WTC11 (cell line): ENCODE measurements at regions of chr22 and their contacts with region 1.

Region 1: GRCh38 chr22:20013382-20013871 is 3.2 kb downstream of the ARVCF start:
- DNase-seq: peak; percentile 91
- ATAC-seq: peak; percentile 62
- H3K4me3 Mint-ChIP-seq: no peak overlapping the region
- H3K27ac Mint-ChIP-seq: no peak overlapping the region
- H3K4me1 Mint-ChIP-seq: peaks cover 8% of the 10 kb centered on the region
- H3K27me3 Mint-ChIP-seq: peaks cover 29% of the 10 kb centered on the region
- CTCF ChIP-seq: peak; percentile 35; the same call in 1 of the 2 replicates

Region 2: DNA sequence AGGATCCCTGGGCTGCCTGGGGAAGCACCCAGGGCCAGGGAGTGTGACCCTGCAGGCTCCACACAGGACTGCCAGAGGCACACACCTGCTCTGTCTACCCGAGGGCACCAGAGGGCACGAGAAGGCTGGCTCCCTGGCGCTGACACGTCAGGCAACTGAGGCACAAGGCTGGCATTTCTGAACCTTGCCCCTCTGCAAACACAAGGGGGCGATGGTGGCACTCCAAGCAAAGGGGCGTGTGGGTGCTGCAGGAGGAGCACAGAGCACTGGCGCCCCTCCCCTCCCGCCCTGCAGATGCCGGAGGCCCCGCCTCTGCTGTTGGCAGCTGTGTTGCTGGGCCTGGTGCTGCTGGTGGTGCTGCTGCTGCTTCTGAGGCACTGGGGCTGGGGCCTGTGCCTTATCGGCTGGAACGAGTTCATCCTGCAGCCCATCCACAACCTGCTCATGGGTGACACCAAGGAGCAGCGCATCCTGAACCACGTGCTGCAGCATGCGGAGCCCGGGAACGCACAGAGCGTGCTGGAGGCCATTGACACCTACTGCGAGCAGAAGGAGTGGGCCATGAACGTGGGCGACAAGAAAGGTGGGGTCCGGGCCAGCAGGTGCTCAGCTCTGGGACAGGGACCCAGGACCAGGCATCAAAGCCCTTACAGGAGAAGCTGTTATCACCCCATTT is 51.1 kb before region 1 on chr22:
- CTCF ChIA-PET with region 1: interaction called, 22 read pairs
- POLR2A ChIA-PET with region 1: interaction called, 4 read pairs
- DNase-seq: peak; percentile 91
- ATAC-seq: peak; percentile 65
- H3K4me3 Mint-ChIP-seq: peak overlapping the region; percentile 61
- H3K27ac Mint-ChIP-seq: peak overlapping the region; percentile 84
- H3K4me1 Mint-ChIP-seq: peaks cover 39% of the 10 kb centered on the region
- H3K27me3 Mint-ChIP-seq: no peaks in the 10 kb centered on the region; the same call in 1 of the 2 replicates
- CTCF ChIP-seq: peak; percentile 81

Region 3: DNA sequence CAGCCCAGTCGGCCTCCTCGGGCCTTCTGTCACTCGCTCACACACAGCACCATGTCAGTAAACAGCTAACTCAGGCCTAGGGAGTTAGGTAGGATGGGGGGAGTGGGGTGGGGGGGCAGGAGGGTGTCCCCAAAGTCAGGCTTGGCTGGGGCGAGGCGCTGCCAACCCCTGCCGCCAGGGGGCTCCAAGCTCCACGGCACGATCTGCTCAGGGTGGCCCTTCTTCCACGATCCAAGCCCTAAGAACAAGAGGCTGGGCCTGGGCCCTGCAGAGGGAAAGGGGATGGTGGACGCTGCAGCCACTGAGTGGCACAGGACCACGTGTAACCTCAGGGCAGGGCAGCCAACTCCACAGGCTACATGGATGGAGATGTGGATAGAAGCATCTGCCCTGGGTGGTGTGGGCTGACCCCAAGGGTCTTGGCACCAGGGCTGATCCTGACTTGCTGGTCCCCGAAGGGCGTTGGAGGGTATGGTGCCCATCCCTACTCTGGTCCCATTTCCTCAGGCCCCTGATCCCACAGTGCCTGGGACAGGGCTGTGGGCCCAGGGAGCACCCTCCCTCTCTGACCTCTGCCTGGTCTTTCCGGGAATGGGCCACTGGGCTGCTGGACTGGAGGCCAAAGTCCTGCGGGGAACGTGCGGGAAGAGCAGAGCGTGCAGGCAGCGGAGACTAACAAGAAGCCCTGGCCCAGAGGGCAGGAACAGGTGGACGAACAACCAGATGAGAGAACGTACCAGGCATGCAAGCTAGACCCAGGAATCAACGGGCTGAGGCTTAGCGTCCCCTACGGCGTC is 42.8 kb before region 1 on chr22:
- CTCF ChIA-PET with region 1: interaction called, 181 read pairs
- POLR2A ChIA-PET with region 1: no interaction called
- DNase-seq: peak; percentile 89
- ATAC-seq: peak; percentile 32
- H3K4me3 Mint-ChIP-seq: no peak overlapping the region
- H3K27ac Mint-ChIP-seq: peak overlapping the region; percentile 31; the same call in 1 of the 2 replicates
- H3K4me1 Mint-ChIP-seq: peaks cover 21% of the 10 kb centered on the region
- H3K27me3 Mint-ChIP-seq: no peaks in the 10 kb centered on the region
- CTCF ChIP-seq: peak; percentile 94

Region 4: DNA sequence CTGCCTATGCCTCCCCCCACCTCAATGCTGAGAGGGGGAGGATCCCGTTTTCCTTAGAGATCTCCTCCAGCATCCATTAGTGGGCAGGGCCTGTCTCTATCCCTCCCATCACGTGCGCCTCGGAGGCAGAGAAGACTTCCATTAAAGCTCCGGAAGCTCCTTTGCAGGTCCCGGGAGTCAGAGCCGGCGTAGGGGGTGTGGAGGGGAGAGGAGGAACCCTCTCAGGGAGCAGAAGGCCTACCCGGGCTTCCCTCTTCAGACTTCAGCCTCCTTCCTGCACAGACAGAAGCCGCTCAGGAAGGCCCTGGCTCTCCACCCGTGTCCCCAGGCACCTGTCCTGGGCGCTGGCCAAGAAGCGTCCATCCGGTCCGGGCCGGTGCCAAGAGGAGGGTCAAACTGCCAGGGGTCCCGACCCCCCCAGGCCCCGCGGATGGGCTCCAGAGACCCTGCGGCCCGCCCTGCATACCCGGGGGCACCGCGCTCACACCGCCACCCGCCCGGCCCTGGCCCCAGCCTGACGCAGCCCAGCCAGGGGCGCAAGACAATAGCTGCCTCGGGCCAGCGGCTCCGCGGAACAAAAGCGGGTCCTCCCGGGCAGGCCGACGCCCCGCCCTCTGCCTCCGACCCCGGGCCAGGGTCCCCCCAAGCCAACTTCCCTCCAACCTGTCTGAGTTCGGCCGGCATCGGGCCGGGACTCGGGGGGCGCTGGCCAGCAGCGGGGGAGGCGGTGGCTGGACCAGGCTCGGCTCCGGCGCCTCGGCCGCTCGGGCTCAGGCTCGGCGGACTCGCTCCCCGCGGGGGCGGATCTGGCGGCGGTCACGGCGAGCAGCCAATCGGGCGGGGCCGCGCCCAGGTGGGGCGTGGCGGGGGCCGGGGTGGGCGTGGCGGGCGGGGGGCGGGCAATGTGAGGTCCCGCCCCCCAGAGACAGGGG is 26.8 kb before region 1 on chr22:
- CTCF ChIA-PET with region 1: interaction called, 23 read pairs
- POLR2A ChIA-PET with region 1: interaction called, 4 read pairs
- DNase-seq: peak; percentile 83
- ATAC-seq: peak; percentile 82
- H3K4me3 Mint-ChIP-seq: peak overlapping the region; percentile 70
- H3K27ac Mint-ChIP-seq: no peak overlapping the region
- H3K4me1 Mint-ChIP-seq: peaks cover 5% of the 10 kb centered on the region; the same call in 1 of the 2 replicates
- H3K27me3 Mint-ChIP-seq: no peaks in the 10 kb centered on the region
- CTCF ChIP-seq: no peak

Region 5: GRCh38 chr22:20000169-20000621 is 13.2 kb before region 1 on chr22:
- CTCF ChIA-PET with region 1: interaction called, 30 read pairs
- POLR2A ChIA-PET with region 1: no interaction called
- DNase-seq: no peak
- ATAC-seq: peak; percentile 46
- H3K4me3 Mint-ChIP-seq: no peak overlapping the region
- H3K27ac Mint-ChIP-seq: peak overlapping the region; percentile 86
- H3K4me1 Mint-ChIP-seq: peaks cover 26% of the 10 kb centered on the region
- H3K27me3 Mint-ChIP-seq: no peaks in the 10 kb centered on the region
- CTCF ChIP-seq: no peak